T-cell (primary cell): ENCODE measurements at regions of chr12 and their contacts with region 1.

Region 1: DNA sequence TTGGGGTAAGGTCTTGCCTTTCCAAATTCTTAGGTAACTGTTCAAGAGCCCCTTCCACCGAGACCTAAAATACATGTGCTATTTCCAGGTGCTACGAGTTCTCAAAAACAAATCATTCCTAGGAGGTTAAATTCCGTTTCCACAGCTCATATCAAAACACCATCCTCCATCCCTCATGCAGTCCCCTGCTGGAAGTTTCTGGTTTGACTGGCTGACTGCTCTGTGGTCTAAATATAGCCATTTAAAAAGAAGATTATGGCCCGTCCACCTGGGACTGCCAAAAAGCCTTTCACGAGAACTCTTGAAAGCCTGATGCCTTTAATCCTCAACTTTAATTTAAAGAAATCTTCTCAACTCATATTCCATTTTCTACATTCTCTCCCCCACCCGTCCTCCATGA is 201.5 kb upstream of the MYL2 start:
- DNase-seq: no peak
- ATAC-seq: no peak
- H3K4me3 ChIP-seq: no peak overlapping the region
- H3K4me3 Mint-ChIP-seq: no peak overlapping the region
- H3K27ac ChIP-seq: no peak overlapping the region
- H3K27ac Mint-ChIP-seq: no peak overlapping the region
- H3K4me1 ChIP-seq: no peaks in the 10 kb centered on the region
- H3K4me1 Mint-ChIP-seq: no peaks in the 10 kb centered on the region
- H3K27me3 ChIP-seq: peaks cover 0 to 9% of the 10 kb centered on the region in 2 experiments
- H3K27me3 Mint-ChIP-seq: peaks cover 7 to 8% of the 10 kb centered on the region in 2 donors

Region 2: GRCh38 chr12:109473006-109473405 is 1648.8 kb before region 1 on chr12:
- CTCF ChIA-PET with region 1: interaction called in 1 of 2 experiments, 11 read pairs
- POLR2A ChIA-PET with region 1: no interaction called
- DNase-seq: no peak
- ATAC-seq: no peak
- H3K4me3 ChIP-seq: no peak overlapping the region
- H3K4me3 Mint-ChIP-seq: no peak overlapping the region
- H3K27ac ChIP-seq: no peak overlapping the region
- H3K27ac Mint-ChIP-seq: no peak overlapping the region
- H3K4me1 ChIP-seq: peaks cover 14 to 27% of the 10 kb centered on the region in 2 experiments
- H3K4me1 Mint-ChIP-seq: peaks cover 28 to 59% (median 56%) of the 10 kb centered on the region in 3 donors
- H3K27me3 ChIP-seq: no peaks in the 10 kb centered on the region
- H3K27me3 Mint-ChIP-seq: no peaks in the 10 kb centered on the region

Region 3: DNA sequence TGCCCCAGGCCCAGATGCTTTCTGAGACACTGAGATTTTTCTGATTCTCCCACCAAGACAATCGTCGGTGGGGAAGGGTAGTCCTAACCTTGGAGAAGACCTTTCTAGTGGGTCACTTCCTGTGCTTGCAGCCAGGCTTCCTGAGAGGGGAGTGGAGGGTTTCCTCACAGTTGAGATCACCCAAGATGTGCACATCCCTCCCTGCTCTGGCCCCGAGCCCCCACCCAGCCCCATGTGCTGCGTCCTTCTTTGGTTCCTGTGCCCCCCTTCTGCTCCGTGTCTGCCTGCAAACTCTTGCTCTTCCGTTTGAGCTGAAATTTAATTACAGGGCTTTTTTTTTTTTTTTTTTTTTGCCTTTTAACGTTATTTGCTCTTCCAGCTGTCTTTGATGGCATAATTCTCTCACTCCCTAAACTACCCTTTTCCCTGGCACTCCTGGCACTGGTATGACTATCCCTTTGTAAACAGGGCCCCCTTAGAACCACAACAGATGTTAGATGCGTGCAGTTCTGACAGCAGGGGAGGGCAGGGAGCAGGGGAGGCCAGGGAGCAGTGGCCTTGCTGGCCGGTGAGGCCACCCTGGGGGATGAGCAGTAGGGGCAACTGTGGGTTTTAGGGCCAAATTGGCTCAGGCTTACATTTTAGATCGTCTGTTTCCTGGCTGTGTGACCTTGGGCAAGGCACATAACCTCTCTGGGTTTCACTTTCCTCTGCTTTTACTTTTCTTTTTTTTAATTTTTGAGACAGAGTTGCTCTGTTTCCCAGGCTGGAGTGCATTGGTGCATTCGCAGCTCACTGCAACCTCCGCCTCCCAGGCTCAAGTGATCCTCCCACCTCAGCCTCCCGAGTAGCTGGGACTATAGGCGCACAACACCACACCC is 102.6 kb after region 1 on chr12:
- CTCF ChIA-PET with region 1: no interaction called
- POLR2A ChIA-PET with region 1: no interaction called
- DNase-seq: no peak
- ATAC-seq: no peak
- H3K4me3 ChIP-seq: no peak overlapping the region
- H3K4me3 Mint-ChIP-seq: no peak overlapping the region
- H3K27ac ChIP-seq: no peak overlapping the region
- H3K27ac Mint-ChIP-seq: no peak overlapping the region
- H3K4me1 ChIP-seq: no peaks in the 10 kb centered on the region
- H3K4me1 Mint-ChIP-seq: peaks cover 5 to 6% (median 5%) of the 10 kb centered on the region in 3 donors
- H3K27me3 ChIP-seq: peaks cover 0 to 21% of the 10 kb centered on the region in 2 experiments
- H3K27me3 Mint-ChIP-seq: peaks cover 0 to 10% of the 10 kb centered on the region in 2 donors